Posterior vena cava (tissue), 2 donors: ENCODE measurements at regions of chr18 and their contacts with region 1.

Region 1: GRCh38 chr18:74353169-74353775 is 37.6 kb downstream of the C18orf63 start:
- DNase-seq: no peak

Region 2: GRCh38 chr18:74126684-74127482 is 226.4 kb before region 1 on chr18:
- intact Hi-C with region 1: no loop called
- DNase-seq: no peak

Region 3: GRCh38 chr18:74378179-74378682 is 25.0 kb after region 1 on chr18:
- intact Hi-C with region 1: no loop called
- DNase-seq: no peak

Region 4: GRCh38 chr18:74476140-74476539 is 122.9 kb after region 1 on chr18:
- intact Hi-C with region 1: loop called in 1 of 2 experiments (anchors 10 kb)
- DNase-seq: no peak

Region 5: DNA sequence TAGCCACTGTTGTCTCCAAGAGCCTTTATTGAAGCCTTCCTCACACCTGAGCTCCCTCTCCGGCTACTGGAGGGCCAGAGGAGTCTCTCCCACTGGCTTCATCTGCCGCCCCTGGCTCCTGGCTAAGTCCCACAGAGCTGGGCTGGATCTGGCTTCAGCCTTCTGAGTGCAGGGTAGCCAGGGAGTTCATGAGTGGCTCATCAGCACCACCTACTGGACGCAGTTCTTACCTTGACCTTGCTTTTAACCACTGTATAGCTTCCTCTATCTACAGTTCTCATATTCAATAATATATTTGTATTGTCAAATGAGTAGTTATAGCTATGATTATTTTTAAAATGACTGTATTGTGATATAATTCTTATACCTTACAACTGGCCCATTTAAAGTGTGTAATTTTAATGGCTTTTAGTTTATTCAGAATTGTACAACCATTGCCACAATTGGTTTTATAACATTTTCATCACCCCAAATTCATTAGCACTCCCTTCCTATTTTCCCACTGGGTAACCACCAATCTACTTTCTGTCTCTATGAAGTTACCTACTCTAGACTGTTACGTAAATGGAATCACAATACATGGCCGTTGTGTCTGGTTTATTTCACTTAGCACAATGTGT is 198.8 kb after region 1 on chr18:
- intact Hi-C with region 1: loop called (anchors 5 to 10 kb)
- DNase-seq: peak; percentile 91

Region 6: DNA sequence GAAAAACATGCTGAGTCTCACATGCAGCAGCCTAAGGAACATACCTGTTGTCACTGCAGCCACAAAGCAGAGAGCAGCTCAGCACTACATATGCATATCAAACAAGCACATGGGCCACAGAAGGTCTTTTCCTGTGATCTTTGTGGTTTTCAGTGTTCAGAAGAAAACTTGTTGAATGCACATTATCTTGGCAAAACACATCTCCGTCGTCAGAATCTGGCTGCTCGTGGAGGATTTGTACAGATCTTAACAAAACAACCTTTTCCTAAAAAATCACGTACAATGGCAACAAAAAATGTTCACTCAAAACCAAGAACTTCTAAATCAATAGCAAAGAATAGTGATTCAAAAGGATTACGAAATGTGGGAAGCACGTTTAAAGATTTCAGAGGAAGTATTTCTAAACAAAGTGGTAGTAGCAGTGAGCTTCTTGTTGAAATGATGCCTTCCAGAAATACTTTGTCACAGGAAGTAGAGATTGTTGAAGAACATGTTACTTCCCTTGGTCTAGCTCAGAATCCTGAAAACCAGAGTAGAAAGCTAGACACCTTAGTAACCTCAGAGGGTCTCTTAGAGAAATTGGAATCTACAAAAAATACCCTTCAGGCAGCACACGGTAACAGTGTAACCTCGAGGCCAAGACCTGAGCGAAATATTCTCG is 278.5 kb after region 1 on chr18:
- intact Hi-C with region 1: no loop called
- DNase-seq: no peak